ENCODE measurements at regions of chr2 and their contacts with region 1.

Region 1: DNA sequence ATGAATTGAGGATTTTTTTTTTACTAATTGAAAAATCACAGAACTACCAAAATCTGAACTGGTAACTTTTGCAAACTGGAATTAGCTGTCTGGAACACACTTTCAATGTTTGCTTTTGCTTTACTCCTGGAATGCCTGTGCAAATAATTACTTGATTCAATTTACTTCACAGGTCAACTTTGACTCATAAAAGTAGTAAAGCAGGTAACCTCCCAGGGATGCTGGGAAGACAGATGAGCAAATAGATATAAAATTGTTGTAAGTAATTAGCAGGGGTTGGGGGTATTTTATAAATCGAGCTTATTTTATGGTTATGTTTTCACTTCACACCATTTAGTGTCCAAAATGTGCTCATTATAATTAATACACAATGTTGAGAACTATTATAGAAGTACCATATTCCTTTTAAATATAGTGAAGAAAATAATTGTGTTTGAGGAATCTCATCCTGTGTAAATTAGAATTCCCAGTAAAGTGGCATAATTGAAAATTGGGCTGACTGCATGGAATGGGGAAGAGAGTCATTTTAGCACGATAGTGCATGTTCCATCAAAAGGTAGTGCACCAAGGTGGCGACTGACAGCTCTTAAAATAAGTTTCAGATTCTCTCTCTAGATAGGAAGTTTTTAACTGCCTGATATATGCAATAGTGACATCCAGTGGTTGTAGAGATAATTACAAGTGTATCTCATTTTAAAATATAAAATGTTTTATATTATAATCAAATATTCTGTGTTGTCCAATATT is 398.1 kb upstream of the HNRNPA3 start:
- DNase-seq: no peak
- ATAC-seq: no peak
- H3K4me3 ChIP-seq: no peak overlapping the region
- H3K27ac ChIP-seq: no peak overlapping the region
- H3K4me1 ChIP-seq: peaks cover 0 to 9% (median 0%) of the 10 kb centered on the region in 9 donors
- H3K27me3 ChIP-seq: peaks cover 0 to 13% (median 5%) of the 10 kb centered on the region in 7 donors
- CTCF ChIP-seq: peak; percentile 38 to 78 (median 66)

Region 2: GRCh38 chr2:176461809-176462382 is 352.6 kb before region 1 on chr2:
- intact Hi-C with region 1: loop called in 1 of 10 experiments (anchors 10 kb)
- DNase-seq: no peak
- ATAC-seq: peak in 4 of 8 donors; percentile 33 to 52 (median 42)
- H3K4me3 ChIP-seq: no peak overlapping the region
- H3K27ac ChIP-seq: peak overlapping the region in 4 of 10 donors; percentile 6 to 57 (median 40)
- H3K4me1 ChIP-seq: peaks cover 0 to 21% (median 16%) of the 10 kb centered on the region in 9 donors
- H3K27me3 ChIP-seq: peaks cover 0 to 65% (median 26%) of the 10 kb centered on the region in 7 donors
- CTCF ChIP-seq: no peak

Region 3: DNA sequence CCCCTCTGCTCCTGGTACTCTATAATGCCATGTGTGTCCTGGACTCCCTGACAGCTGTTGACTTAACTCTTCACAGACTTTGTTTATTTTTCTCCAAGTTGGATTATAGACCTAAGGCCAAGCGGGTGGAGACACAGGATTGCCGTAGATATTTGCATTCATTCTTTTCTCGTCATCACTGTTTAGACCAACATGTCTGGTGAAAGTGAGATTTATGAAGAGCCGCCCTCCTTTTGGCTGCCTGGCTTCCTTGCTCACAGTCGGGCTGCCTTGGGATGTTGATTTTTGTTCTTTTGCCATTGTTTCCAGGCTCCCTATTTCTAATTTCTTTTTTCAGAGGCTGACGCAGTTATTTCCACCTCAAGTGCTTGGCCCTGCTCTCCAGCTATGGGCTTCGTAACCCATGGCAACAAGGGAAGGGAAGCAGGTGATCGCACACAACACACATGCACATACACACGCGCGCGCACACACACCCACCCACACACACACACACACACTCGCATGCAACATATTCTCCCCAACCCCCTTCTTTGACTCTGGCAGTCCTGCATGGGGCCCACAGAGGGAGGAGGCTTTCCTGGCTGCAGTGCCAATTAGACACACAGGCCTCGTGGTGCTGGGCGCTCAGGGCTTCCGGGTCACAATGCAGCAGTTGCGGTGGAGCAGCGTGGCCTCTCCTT is 248.7 kb before region 1 on chr2:
- intact Hi-C with region 1: loop called in 1 of 10 experiments (anchors 10 kb)
- DNase-seq: no peak
- ATAC-seq: no peak
- H3K4me3 ChIP-seq: no peak overlapping the region
- H3K27ac ChIP-seq: no peak overlapping the region
- H3K4me1 ChIP-seq: no peaks in the 10 kb centered on the region
- H3K27me3 ChIP-seq: peaks cover 0 to 72% (median 23%) of the 10 kb centered on the region in 7 donors
- CTCF ChIP-seq: no peak

Measured in heart right ventricle (tissue), 16 donors.